ENCODE measurements at regions of chr4 and their contacts with region 1.

Region 1: DNA sequence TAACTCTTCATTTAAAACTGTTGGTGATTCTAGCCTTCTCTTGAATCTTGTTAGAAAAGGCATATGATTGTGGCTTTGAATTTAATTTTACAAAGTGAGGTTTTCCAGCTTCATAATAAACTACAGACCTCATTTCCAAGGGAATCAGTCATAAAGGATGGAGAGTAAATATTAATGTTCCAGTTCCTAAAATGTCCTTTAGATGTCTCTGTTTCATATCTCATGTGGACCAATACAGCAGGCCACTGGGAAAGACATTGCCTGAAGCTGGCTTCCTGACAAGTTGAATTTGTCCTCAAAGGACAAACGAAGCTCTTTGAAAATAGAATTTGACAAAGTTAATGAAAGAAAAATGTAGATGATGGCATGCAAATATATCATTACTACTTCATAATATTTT is 125.4 kb downstream of the ZNF330 start:
- DNase-seq: peak; percentile 26
- CTCF ChIP-seq: peak; percentile 39

Region 2: DNA sequence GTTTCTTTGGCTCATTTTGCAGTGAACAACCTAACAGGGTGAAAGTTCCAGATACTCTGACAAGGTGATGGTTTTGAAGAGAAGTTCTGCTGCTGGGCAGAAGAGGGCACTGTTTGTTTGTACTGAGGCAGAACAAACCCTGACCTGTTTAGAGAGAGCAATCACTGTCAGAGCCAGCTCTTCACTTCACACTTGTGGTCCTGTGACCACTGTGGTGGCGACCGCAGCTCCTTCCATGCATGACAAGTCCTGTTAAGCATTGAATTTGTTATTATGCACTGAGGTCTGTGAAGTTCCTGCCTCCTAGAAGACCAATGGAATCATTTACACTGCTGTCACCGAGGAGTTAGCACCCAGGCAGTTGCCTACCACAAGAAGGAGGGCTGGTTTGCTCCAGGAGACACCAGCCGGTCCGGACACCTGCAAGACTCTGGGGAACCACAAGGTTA is 38.9 kb before region 1 on chr4:
- CTCF ChIA-PET with region 1: interaction called, 20 read pairs
- POLR2A ChIA-PET with region 1: no interaction called
- DNase-seq: peak; percentile 79
- CTCF ChIP-seq: peak; percentile 79

Region 3: DNA sequence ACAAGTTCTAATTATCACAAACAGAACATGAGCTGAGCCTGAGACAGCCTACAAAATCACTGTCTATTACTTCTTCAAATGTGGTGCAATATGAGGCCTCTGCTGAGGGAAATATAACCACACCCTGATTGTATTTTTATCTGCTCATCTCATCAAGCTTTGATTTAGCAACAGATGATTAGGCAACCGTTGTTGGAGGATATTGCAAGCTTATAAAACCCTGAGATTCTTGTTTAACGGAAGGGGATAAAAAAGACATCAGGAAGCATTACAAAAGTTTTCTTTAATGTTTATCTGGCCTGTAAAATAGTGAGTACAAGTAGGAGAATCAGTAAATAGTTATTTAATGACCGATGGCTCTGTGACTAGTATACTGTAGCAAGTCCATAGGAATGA is 17.0 kb before region 1 on chr4:
- CTCF ChIA-PET with region 1: interaction called, 34 read pairs
- POLR2A ChIA-PET with region 1: no interaction called
- DNase-seq: no peak
- CTCF ChIP-seq: no peak

Region 4: DNA sequence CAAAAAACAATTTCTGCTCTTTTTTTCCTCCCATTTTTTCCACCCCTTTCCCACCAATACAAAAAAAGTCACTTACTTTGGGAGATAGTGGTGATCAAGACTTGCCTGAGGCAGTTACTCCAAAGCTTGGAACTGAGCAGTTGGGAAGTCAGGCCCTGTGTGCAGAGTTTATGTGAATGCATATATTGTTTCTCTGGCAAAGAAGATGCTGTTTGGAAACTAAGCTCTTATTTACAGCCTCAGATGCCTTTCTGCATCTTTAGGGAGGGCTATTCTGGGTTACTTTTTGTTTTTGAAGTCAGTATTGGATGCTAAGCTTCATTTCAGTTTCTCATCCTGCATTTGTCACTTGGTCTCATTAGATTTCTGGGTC is 10.8 kb after region 1 on chr4:
- CTCF ChIA-PET with region 1: interaction called, 34 read pairs
- POLR2A ChIA-PET with region 1: no interaction called
- DNase-seq: no peak
- CTCF ChIP-seq: no peak

Region 5: GRCh38 chr4:141473952-141474351 is 127.8 kb after region 1 on chr4:
- CTCF ChIA-PET with region 1: no interaction called
- POLR2A ChIA-PET with region 1: no interaction called
- DNase-seq: no peak
- CTCF ChIP-seq: no peak

Region 6: GRCh38 chr4:141912831-141913230 is 566.7 kb after region 1 on chr4:
- CTCF ChIA-PET with region 1: no interaction called
- POLR2A ChIA-PET with region 1: no interaction called
- DNase-seq: no peak
- CTCF ChIP-seq: no peak

Region 7: GRCh38 chr4:142081025-142081424 is 734.9 kb after region 1 on chr4:
- CTCF ChIA-PET with region 1: no interaction called
- POLR2A ChIA-PET with region 1: no interaction called
- DNase-seq: no peak
- CTCF ChIP-seq: no peak

Measured in GM10248 (cell line).